T-cell (primary cell): ENCODE measurements at regions of chr2 and their contacts with region 1.

Region 1: GRCh38 chr2:151289369-151290088 is at the start of gene NMI:
- DNase-seq: peak; percentile 23 to 75 (median 52)
- ATAC-seq: peak; percentile 75 to 80 (median 77)
- H3K4me3 ChIP-seq: peak within 1 kb of the TSS; percentile 84 to 91
- H3K4me3 Mint-ChIP-seq: peak within 1 kb of the TSS; percentile 83 to 91 (median 91)
- H3K27ac ChIP-seq: peak within 1 kb of the TSS; percentile 98
- H3K27ac Mint-ChIP-seq: peak within 1 kb of the TSS; percentile 96 to 99
- H3K4me1 ChIP-seq: peaks cover 18 to 22% of the 10 kb centered on the region in 2 experiments
- H3K4me1 Mint-ChIP-seq: peaks cover 54 to 60% (median 60%) of the 10 kb centered on the region in 3 donors
- H3K27me3 ChIP-seq: no peaks in the 10 kb centered on the region
- H3K27me3 Mint-ChIP-seq: no peaks in the 10 kb centered on the region
- total RNA-seq, gene NMI: 21.1 to 34.7 (median 24.0) TPM

Region 2: DNA sequence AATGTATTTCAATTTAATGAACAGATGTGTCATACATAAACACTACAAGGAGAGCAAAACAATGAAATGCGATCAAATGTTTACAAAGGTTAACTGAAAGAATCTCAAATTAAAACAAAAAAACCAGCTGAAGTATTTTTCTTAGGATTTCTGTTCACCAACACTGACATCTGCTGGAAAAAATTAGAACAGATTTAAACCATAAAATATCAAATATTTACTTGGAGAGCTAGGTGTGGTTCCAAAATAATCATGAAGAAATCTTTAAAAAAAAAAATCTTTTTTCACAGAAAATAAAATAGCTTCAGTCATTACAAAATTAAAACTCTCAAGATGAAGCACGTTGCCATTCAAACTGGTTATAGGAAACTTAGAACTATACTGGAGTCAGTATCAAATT is 1715.8 kb before region 1 on chr2:
- CTCF ChIA-PET with region 1: no interaction called
- POLR2A ChIA-PET with region 1: interaction called in 1 of 2 experiments, 10 read pairs
- DNase-seq: no peak
- ATAC-seq: no peak
- H3K4me3 ChIP-seq: no peak overlapping the region
- H3K4me3 Mint-ChIP-seq: no peak overlapping the region
- H3K27ac ChIP-seq: no peak overlapping the region
- H3K27ac Mint-ChIP-seq: no peak overlapping the region
- H3K4me1 ChIP-seq: no peaks in the 10 kb centered on the region
- H3K4me1 Mint-ChIP-seq: peaks cover 26 to 30% (median 26%) of the 10 kb centered on the region in 3 donors
- H3K27me3 ChIP-seq: no peaks in the 10 kb centered on the region
- H3K27me3 Mint-ChIP-seq: no peaks in the 10 kb centered on the region

Region 3: DNA sequence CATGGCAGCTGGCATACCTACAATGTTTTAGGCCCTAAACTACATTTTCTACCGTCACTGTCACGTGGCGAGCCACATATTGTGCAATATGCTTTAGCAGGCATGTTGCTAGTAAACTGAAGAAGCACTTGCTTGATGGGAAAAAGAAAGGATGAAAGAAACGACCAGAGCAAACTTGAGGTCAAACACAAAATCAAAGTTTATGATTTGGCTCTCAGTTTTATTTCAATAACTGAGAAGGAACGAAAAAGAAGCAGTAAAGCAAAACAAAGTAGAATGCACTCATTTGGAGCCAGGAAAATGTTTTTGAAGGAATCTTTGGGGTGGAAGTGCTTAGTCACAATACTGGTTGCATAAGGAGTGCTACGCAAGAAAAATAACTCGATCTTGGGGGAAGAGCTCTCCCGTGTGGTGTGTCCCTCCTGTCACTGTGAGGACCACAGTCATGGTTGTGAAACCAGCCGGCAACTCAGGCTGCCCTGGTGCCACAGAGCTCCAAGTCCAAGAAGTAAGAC is 377.7 kb before region 1 on chr2:
- CTCF ChIA-PET with region 1: no interaction called
- POLR2A ChIA-PET with region 1: no interaction called
- DNase-seq: no peak
- ATAC-seq: no peak
- H3K4me3 ChIP-seq: no peak overlapping the region
- H3K4me3 Mint-ChIP-seq: no peak overlapping the region
- H3K27ac ChIP-seq: no peak overlapping the region
- H3K27ac Mint-ChIP-seq: no peak overlapping the region
- H3K4me1 ChIP-seq: no peaks in the 10 kb centered on the region
- H3K4me1 Mint-ChIP-seq: no peaks in the 10 kb centered on the region
- H3K27me3 ChIP-seq: no peaks in the 10 kb centered on the region
- H3K27me3 Mint-ChIP-seq: no peaks in the 10 kb centered on the region

Region 4: GRCh38 chr2:151265991-151266390 is 23.5 kb before region 1 on chr2:
- CTCF ChIA-PET with region 1: interaction called in 1 of 2 experiments, 5 read pairs
- POLR2A ChIA-PET with region 1: interaction called, 8 to 12 read pairs
- DNase-seq: no peak
- ATAC-seq: no peak
- H3K4me3 ChIP-seq: no peak overlapping the region
- H3K4me3 Mint-ChIP-seq: no peak overlapping the region
- H3K27ac ChIP-seq: no peak overlapping the region
- H3K27ac Mint-ChIP-seq: no peak overlapping the region
- H3K4me1 ChIP-seq: peaks cover 6 to 7% of the 10 kb centered on the region in 2 experiments
- H3K4me1 Mint-ChIP-seq: peaks cover 12 to 17% (median 14%) of the 10 kb centered on the region in 3 donors
- H3K27me3 ChIP-seq: no peaks in the 10 kb centered on the region
- H3K27me3 Mint-ChIP-seq: no peaks in the 10 kb centered on the region

Region 5: GRCh38 chr2:151306621-151307020 is 17.1 kb after region 1 on chr2:
- CTCF ChIA-PET with region 1: no interaction called
- POLR2A ChIA-PET with region 1: no interaction called
- DNase-seq: no peak
- ATAC-seq: no peak
- H3K4me3 ChIP-seq: no peak overlapping the region
- H3K4me3 Mint-ChIP-seq: no peak overlapping the region
- H3K27ac ChIP-seq: no peak overlapping the region
- H3K27ac Mint-ChIP-seq: no peak overlapping the region
- H3K4me1 ChIP-seq: no peaks in the 10 kb centered on the region
- H3K4me1 Mint-ChIP-seq: no peaks in the 10 kb centered on the region
- H3K27me3 ChIP-seq: peaks cover 0 to 5% of the 10 kb centered on the region in 2 experiments
- H3K27me3 Mint-ChIP-seq: no peaks in the 10 kb centered on the region

Region 6: GRCh38 chr2:151325581-151326095 is 36.1 kb after region 1 on chr2:
- CTCF ChIA-PET with region 1: interaction called in 1 of 2 experiments, 13 read pairs
- POLR2A ChIA-PET with region 1: no interaction called
- DNase-seq: no peak
- ATAC-seq: no peak
- H3K4me3 ChIP-seq: no peak overlapping the region
- H3K4me3 Mint-ChIP-seq: no peak overlapping the region
- H3K27ac ChIP-seq: no peak overlapping the region
- H3K27ac Mint-ChIP-seq: no peak overlapping the region
- H3K4me1 ChIP-seq: no peaks in the 10 kb centered on the region
- H3K4me1 Mint-ChIP-seq: no peaks in the 10 kb centered on the region
- H3K27me3 ChIP-seq: peaks cover 0 to 5% of the 10 kb centered on the region in 2 experiments
- H3K27me3 Mint-ChIP-seq: no peaks in the 10 kb centered on the region